H1 (cell line): ENCODE measurements at regions of chr6 and their contacts with region 1.

Region 1: DNA sequence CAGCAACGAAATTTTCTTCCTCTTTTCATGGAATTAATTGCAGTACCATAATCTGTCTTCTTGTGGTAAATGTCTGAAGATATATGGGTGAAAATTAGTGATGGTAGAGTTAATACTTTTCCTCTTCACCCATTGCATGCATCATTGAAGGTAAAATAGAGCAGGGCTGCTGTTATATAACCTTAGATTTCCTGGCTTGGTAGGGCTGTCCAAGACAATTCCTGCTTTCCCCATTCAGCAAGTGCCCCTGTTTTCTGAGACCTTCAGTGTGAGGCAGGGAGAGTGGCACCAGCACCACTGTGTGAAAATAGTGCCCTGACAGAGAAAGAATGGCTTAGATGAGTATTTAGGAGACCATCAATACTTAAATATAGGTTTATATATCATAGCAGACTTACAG is 202.0 kb downstream of the ZFAND3 start:
- DNase-seq: no peak
- H3K4me3 ChIP-seq: no peak overlapping the region
- H3K27ac ChIP-seq: no peak overlapping the region
- H3K4me1 ChIP-seq: no peaks in the 10 kb centered on the region
- H3K27me3 ChIP-seq: no peaks in the 10 kb centered on the region
- CTCF ChIP-seq: no peak
- EP300 ChIP-seq: no peak
- POLR2A ChIP-seq: no peak
- RAD21 ChIP-seq: no peak

Region 2: GRCh38 chr6:38034274-38034914 is 12.8 kb after region 1 on chr6:
- CTCF ChIA-PET with region 1: interaction called, 16 read pairs
- POLR2A ChIA-PET with region 1: interaction called, 3 read pairs
- DNase-seq: no peak
- H3K4me3 ChIP-seq: no peak overlapping the region
- H3K27ac ChIP-seq: no peak overlapping the region
- H3K4me1 ChIP-seq: peaks cover 0 to 2% (median 0%) of the 10 kb centered on the region in 4 experiments; a peak in 1 of 7 replicates
- H3K27me3 ChIP-seq: no peaks in the 10 kb centered on the region
- CTCF ChIP-seq: peak in 1 of 3 experiments; percentile 45; a peak in 2 of 4 replicates
- EP300 ChIP-seq: no peak
- POLR2A ChIP-seq: no peak
- RAD21 ChIP-seq: peak; percentile 44 to 49

Region 3: GRCh38 chr6:38045701-38046305 is 24.2 kb after region 1 on chr6:
- CTCF ChIA-PET with region 1: no interaction called
- POLR2A ChIA-PET with region 1: no interaction called
- DNase-seq: no peak
- H3K4me3 ChIP-seq: no peak overlapping the region
- H3K27ac ChIP-seq: no peak overlapping the region
- H3K4me1 ChIP-seq: no peaks in the 10 kb centered on the region
- H3K27me3 ChIP-seq: no peaks in the 10 kb centered on the region
- CTCF ChIP-seq: no peak
- EP300 ChIP-seq: no peak
- POLR2A ChIP-seq: no peak
- RAD21 ChIP-seq: no peak

Region 4: DNA sequence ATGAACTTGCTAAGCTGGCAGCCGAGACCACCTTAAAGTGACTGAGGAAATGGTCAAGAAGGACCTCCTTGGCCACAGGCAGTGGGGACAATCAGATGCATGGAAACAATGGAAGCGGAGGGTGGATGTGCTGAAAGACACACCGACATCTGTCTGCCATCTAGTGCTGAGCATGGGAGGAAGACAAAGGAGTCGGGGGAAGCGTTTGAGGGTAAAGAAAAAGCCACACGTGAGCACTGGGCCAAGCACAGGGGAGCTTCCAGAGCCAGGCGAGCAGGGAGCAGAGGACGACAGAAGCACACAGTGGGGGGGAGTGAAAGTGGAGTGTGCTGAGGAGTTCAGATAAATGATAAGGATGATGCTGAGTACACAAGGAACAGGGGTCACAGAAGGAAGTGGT is 165.8 kb after region 1 on chr6:
- CTCF ChIA-PET with region 1: interaction called, 12 read pairs
- POLR2A ChIA-PET with region 1: no interaction called
- DNase-seq: no peak
- H3K4me3 ChIP-seq: no peak overlapping the region
- H3K27ac ChIP-seq: no peak overlapping the region
- H3K4me1 ChIP-seq: peaks cover 3 to 20% (median 11%) of the 10 kb centered on the region in 4 experiments
- H3K27me3 ChIP-seq: no peaks in the 10 kb centered on the region
- CTCF ChIP-seq: peak; percentile 12 to 48 (median 35); a peak in 2 of 4 replicates
- EP300 ChIP-seq: no peak
- POLR2A ChIP-seq: no peak
- RAD21 ChIP-seq: peak; percentile 60 to 69